GM10248 (cell line): ENCODE measurements at regions of chr16 and their contacts with region 1.

Region 1: DNA sequence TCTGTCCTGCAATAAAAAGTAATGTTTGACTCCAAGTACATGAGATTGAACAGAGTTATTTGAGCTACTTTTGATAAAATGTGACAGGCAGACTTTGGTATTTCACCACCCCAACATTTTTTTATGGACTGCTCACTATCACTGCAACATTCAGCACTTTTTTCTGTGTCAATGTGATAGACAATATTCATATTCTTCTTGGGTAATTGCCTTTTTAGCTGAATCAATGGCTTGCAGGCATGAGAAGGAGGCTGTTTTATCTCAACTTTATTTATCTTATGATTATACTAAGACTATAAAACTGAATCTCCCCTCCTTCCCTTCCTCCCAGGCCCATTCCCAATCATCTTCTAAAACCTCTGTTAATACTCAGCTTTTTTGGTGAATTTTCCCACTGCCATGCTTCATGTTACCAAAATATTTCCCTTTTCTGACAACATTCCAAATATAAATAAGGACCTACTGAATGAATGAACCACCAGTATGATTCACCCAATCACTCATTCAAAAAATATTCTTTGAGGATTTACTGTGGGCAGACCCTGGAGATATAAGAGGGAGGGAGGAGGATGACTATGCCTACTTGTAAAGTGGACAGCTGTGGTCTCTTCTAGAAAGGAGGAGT is 67.6 kb downstream of the CDH13 start:
- DNase-seq: no peak
- CTCF ChIP-seq: no peak

Region 2: GRCh38 chr16:82603784-82604411 is 90.5 kb before region 1 on chr16:
- CTCF ChIA-PET with region 1: no interaction called
- POLR2A ChIA-PET with region 1: no interaction called
- DNase-seq: no peak
- CTCF ChIP-seq: no peak

Region 3: DNA sequence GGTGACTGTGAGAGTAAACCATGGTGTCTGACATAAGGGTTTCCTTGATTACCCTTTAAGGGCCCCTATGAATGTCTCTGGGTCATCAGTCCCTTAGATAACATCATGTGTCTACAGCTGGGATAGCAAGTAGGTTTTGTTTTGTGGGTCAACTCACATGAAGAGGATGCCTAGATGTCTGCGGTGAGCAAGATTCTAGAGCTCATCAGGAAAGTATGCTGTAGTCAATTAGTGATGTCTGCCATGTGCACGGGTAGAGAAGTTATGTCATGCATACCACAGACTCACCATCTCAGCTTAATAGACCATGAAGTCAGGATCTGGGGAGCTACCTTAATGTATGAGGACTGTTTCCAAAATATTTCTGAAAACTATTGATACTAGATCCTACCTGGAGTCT is 10.1 kb before region 1 on chr16:
- CTCF ChIA-PET with region 1: interaction called, 10 read pairs
- POLR2A ChIA-PET with region 1: no interaction called
- DNase-seq: no peak
- CTCF ChIP-seq: no peak

Region 4: DNA sequence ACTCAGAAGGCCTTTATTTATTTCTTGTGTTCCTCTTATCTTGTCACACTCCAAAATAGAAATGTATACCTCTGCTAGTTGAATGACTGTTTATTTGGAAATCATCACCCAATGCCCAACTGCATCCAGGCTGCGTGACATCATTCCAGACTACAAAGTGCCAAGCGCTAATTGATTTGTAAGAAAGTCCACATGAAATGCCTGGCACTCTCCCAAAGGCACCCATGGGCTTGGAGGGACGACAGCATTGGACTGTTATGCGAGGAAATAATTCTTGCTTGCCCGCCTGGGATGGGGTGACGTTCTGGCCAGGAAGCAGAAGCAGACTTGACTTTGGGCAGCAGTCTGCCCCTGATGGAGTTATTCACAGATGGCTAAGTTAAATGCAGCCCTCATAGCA is 98.3 kb after region 1 on chr16:
- CTCF ChIA-PET with region 1: no interaction called
- POLR2A ChIA-PET with region 1: no interaction called
- DNase-seq: no peak
- CTCF ChIP-seq: no peak